ENCODE measurements at regions of chr17 and their contacts with region 1.

Region 1: DNA sequence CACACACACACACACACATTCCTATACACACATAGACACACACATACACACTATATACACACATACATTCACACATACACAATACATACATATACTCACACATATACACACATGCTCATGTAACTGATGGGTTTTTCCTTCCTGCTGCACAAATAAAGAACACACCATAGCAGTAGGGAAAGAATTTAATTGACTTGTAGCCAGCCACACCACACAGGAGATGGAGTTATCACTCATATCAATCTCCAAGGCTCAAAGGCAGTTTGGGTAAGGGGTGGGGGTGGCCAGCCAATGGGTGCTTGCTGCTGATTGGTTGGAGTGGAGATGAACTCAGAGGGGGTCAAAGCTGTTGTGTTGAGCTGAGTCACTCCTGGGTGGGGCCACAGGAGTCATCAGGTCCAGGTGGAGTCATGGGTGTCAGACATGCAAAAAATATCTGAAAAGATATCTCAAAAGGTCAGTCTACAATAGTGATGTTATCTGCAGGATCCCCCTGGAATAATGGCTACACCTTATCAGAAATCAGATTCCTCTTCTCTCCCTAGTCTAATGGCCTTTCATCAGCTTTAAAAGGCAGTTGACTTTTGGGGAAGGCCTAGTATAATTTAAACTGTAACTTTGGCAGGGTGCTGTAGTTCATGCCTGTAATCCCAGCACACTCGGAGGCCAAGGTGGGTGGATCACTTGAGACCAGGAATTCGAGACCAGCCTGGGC is 46.1 kb downstream of the WSB1 start:
- DNase-seq: peak; percentile 15

Region 2: DNA sequence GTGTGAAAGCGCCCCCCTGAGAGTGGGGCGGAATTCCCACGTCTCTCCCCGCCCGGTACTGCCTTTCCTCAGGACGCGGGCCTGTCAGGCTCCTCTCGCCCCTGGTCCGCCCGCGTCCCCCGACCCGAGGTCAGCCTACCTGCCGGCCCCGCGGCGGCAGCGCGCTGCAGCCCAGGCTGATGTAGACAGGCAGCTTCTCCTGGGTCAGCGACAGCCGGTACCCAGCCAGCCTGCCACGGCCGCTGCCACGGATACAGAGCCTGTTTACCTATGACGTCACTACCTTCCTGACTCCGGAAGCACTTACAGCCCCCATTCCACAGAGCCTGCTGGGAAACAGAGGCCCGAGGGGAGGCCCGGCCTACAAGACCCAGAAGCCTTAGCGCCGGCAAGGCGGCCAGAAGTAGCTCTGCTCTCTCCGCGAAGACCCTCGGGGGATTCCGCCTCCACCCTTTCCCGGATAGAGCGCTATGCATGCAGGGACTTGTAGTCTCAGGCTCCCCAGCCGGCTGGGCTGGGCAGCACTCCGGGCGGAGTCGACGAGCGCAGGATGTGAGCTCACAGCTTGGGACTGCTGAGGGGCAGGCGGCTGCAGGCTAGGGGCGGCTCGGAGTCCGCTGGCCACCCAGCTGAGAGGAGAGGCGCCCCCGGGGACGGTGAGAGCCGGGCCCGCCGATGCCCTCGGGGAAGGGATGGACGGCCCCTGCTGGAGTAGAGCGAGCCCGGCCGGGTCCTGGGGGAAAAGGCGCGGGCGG is 995.4 kb after region 1 on chr17 and contains the starts of genes IFT20 and TNFAIP1:
- intact Hi-C with region 1: loop called in 1 of 2 experiments (anchors 5 kb)
- DNase-seq: peak; percentile 100
- total RNA-seq, gene IFT20: 28.3 to 34.9 TPM
- total RNA-seq, gene TNFAIP1: 39.7 to 45.9 TPM